Activated naive CD4-positive, alpha-beta T cell treated with anti-CD3 and anti-CD28 coated beads for 36 hours (primary cell): ENCODE measurements at regions of chr11 and their contacts with region 1.

Region 1: GRCh38 chr11:77091146-77091940 is 11.3 kb upstream of the OMP start:
- DNase-seq: peak; percentile 89
- H3K4me3 Mint-ChIP-seq: no peak overlapping the region
- H3K27ac Mint-ChIP-seq: no peak overlapping the region
- H3K4me1 Mint-ChIP-seq: peaks cover 5% of the 10 kb centered on the region
- H3K27me3 Mint-ChIP-seq: no peaks in the 10 kb centered on the region

Region 2: GRCh38 chr11:75214411-75214821 is 1876.9 kb before region 1 on chr11:
- CTCF ChIA-PET with region 1: no interaction called
- intact Hi-C with region 1: no loop called
- DNase-seq: peak; percentile 92
- H3K4me3 Mint-ChIP-seq: no peak overlapping the region
- H3K27ac Mint-ChIP-seq: no peak overlapping the region
- H3K4me1 Mint-ChIP-seq: no peaks in the 10 kb centered on the region
- H3K27me3 Mint-ChIP-seq: peaks cover 12% of the 10 kb centered on the region

Region 3: DNA sequence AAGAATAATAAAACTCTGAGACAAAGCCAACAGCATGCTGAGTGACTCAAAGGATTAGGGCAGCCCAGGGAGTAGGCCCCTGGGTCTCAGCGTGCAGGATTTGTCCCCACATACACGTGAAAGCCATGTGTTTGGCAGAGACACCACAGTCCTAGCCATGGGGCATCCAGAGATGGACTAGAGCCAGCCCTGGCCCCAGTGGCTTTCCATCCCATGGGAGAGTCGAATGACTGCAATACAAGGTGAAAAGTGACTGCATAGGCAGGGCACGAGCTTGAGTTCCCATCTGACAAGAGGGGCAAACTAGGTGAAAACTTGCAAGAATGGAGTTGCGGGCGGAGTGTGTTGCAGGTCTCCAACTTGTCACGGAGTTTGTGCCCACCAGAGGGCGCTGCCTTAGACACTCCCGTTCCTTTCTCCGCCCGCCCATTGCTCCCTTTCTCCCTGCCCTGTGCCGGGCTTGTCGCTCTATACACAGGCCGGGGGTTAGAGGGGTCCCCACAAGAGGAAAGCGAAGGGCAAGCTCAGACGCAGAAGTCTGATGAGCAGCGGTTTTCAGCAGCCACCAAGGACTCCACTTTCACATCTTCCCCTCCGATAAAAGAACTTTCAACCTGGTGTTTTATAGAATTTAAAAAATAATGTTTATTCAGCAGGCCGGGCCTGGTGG is 284.0 kb before region 1 on chr11:
- CTCF ChIA-PET with region 1: interaction called, 18 read pairs
- intact Hi-C with region 1: loop called (anchors 1 kb)
- DNase-seq: peak; percentile 86
- H3K4me3 Mint-ChIP-seq: no peak overlapping the region
- H3K27ac Mint-ChIP-seq: no peak overlapping the region
- H3K4me1 Mint-ChIP-seq: peaks cover 26% of the 10 kb centered on the region
- H3K27me3 Mint-ChIP-seq: peaks cover 7% of the 10 kb centered on the region

Region 4: DNA sequence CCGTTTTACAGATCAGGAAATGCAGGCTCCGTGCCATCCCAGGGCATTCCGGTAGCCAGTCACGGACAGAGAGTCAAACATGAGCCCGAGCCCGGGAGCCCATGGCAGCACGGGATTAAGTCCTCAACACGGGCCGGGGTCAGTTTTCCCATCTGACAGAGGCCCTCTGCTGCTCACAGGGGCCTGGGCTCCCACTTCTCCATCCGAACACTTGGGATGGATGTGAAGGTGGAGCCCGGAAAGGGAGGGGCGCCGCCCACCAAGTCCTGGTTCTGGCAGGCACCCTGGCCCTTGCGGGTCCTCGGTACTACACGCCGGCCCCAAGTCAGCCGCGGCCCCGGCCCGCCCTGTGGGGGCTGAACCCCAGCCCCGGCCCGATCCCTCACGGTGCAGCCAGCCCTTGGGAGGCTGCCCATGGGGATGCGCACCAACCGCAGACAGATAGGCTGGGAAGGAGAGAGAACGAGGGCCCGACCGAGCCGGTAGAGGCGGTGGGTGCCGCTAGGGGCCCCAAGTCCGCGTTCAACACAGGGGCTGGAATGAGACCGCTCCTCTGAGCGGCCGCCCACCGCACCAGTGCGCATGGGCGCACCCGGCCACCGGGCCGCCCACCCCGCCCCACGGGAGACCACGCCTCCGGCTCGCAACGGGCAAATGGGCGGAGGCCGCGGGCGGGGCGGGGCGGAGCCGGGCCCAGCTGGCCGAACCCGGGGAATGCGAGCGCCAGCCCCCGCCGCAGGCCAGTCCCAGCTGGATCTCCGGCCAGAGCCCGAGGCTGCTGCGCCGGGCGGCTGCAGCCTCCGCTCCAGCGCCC is 24.9 kb before region 1 on chr11 and contains the start of gene CAPN5:
- CTCF ChIA-PET with region 1: interaction called, 33 read pairs
- intact Hi-C with region 1: loop called (anchors 1 kb)
- DNase-seq: peak; percentile 82
- H3K4me3 Mint-ChIP-seq: peak within 1 kb of the TSS; percentile 77
- H3K27ac Mint-ChIP-seq: no peak within 1 kb of the TSS
- H3K4me1 Mint-ChIP-seq: peaks cover 10% of the 10 kb centered on the region
- H3K27me3 Mint-ChIP-seq: no peaks in the 10 kb centered on the region
- total RNA-seq, gene CAPN5: 0.79 to 1.5 TPM

Region 5: DNA sequence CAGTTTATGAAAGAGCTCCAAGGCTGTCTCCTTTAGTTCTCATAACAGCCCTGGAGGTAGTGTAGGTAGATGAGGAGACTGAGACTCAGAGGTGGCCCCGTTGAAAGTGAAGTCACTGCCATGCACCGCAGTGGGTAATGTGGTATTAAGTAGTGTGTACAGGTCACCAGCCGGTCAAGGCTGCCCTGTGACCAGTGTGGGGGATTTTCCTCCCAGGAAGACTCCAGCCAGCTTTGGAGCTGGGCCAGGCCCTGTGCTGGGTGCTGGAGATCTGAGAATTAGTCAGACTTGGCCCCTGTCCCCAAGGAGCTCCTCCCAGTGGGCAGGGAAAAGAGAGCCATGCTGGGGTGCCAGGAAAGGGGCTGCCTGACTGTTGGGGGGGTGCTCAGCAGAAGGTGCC is 16.6 kb after region 1 on chr11:
- CTCF ChIA-PET with region 1: interaction called, 12 read pairs
- intact Hi-C with region 1: no loop called
- DNase-seq: no peak
- H3K4me3 Mint-ChIP-seq: no peak overlapping the region
- H3K27ac Mint-ChIP-seq: no peak overlapping the region
- H3K4me1 Mint-ChIP-seq: no peaks in the 10 kb centered on the region
- H3K27me3 Mint-ChIP-seq: no peaks in the 10 kb centered on the region